ENCODE measurements at regions of chr1 and their contacts with region 1.

Region 1: DNA sequence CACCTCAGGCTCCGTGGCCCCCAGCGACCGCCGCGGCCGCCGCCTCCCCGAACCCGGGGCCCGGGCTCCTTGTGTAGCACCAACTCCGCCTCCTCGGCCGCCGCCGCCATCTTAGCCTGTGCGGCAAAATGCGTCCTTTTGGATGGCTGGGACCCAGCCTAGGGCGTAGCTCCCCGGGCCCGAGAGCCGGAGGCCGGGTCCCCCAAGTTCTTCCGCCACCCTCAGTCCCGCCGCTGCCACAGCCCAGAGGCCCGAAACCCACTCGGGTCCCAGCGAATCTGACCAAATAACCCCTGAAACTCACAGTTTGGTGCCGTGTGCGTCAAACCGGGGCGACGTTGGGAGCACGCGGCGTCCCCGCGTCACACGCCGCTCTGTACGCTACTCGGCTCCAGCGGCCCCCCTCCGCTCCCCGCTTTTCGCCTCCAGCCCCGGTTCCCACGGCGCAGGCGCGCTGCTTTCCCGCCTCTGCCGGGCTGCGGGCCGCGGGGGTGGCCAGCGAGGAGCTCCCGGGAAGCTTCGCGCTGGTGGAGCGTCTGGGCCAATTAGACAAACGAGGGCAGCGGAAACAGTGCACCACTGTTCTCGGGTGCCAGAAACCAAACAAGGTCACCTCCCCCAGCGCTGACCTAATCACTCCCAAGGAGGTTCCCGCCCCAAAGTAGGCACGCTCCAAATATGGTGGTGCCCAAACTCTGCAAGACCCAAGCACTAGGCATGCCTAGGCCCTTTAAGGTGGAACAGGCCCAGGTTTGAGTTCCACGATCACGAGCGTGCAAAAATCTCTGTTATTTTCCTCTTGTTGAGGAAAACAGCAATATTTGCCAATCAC is at the start of gene ZNF644:
- DNase-seq: peak; percentile 92
- ATAC-seq: peak; percentile 83
- H3K4me3 ChIP-seq: peak within 1 kb of the TSS; percentile 76 to 99 (median 95)
- H3K4me3 Mint-ChIP-seq: peak within 1 kb of the TSS; percentile 96
- H3K27ac ChIP-seq: peak within 1 kb of the TSS; percentile 100
- H3K27ac Mint-ChIP-seq: peak within 1 kb of the TSS; percentile 99
- H3K4me1 ChIP-seq: peaks cover 49 to 70% of the 10 kb centered on the region in 2 donors
- H3K4me1 Mint-ChIP-seq: peaks cover 74% of the 10 kb centered on the region
- H3K27me3 ChIP-seq: no peaks in the 10 kb centered on the region
- H3K27me3 Mint-ChIP-seq: no peaks in the 10 kb centered on the region
- CTCF ChIP-seq: no peak
- total RNA-seq, gene ZNF644: 124 and 131 TPM in 2 replicates

Region 2: DNA sequence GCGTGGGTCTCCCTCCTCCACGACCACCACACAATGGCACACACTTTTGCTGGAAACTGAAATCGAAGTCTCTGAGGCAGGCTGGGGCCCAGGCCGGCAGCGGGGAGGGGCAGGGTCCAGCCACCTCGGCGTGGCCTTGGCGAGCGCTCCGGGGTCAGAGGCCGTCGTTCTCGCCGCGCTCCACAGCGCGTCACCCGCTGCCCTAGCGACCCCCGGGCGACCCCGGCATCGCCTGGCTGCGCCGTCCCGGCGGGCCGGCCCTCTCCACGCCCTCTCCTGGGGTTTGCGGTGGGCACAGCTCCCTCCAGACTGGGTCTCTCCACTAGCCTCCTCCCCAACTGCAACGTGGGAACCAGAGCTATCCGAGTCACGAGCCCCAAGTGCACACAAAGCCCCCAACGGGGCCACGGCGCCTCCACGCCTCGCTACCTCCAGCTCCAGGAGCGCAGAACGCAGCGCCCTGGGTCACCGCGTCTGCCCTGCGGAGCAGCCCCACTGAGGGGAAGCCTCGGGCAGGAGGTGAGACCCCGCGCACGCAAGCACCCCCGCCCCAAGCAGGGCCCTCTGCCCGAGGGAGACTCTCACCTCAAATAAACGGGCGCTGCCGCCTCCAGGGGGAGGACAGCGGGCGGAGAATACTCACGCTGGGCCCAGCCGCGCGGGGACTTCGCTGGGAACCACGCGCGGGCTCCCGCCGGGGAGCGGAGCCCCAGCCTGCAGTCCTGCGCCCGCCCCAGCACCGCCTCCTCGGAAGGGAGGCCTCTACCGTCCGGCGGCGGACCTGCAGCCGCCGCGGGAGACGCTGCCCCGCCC is 170.8 kb before region 1 on chr1:
- CTCF ChIA-PET with region 1: no interaction called
- POLR2A ChIA-PET with region 1: no interaction called
- intact Hi-C with region 1: loop called (anchors 2 kb)
- DNase-seq: peak; percentile 83
- ATAC-seq: peak; percentile 99
- H3K4me3 ChIP-seq: peak overlapping the region; percentile 17 to 72 (median 62)
- H3K4me3 Mint-ChIP-seq: peak overlapping the region; percentile 90
- H3K27ac ChIP-seq: no peak overlapping the region
- H3K27ac Mint-ChIP-seq: no peak overlapping the region
- H3K4me1 ChIP-seq: peaks cover 15 to 19% of the 10 kb centered on the region in 2 donors
- H3K4me1 Mint-ChIP-seq: peaks cover 13% of the 10 kb centered on the region
- H3K27me3 ChIP-seq: peaks cover 3 to 23% (median 23%) of the 10 kb centered on the region in 4 experiments
- H3K27me3 Mint-ChIP-seq: peaks cover 43% of the 10 kb centered on the region
- CTCF ChIP-seq: peak; percentile 76

Region 3: GRCh38 chr1:90964444-90965035 is 57.4 kb before region 1 on chr1:
- CTCF ChIA-PET with region 1: no interaction called
- POLR2A ChIA-PET with region 1: no interaction called
- intact Hi-C with region 1: no loop called
- DNase-seq: no peak
- ATAC-seq: no peak
- H3K4me3 ChIP-seq: no peak overlapping the region
- H3K4me3 Mint-ChIP-seq: no peak overlapping the region
- H3K27ac ChIP-seq: no peak overlapping the region
- H3K27ac Mint-ChIP-seq: no peak overlapping the region
- H3K4me1 ChIP-seq: no peaks in the 10 kb centered on the region
- H3K4me1 Mint-ChIP-seq: peaks cover 48% of the 10 kb centered on the region
- H3K27me3 ChIP-seq: no peaks in the 10 kb centered on the region
- H3K27me3 Mint-ChIP-seq: no peaks in the 10 kb centered on the region
- CTCF ChIP-seq: peak; percentile 12

Region 4: DNA sequence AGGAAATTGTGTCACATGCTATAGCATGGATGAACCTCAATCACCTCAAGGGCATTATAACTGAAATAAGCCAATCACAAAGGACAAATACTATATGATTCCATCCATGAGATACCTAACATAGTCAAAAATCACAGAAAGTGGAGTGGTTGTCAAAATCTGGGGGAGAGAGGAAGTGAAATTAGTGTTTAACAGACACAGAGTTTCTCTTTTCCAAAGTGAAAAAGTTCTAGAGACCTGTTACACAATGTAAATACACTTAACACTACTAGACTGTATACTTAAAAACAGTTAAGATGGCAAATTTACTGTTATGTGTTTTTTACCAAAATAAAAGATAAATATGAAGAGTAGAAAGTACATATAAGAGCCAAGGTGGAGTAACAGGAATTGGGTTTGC is 31.9 kb before region 1 on chr1:
- CTCF ChIA-PET with region 1: interaction called, 3 read pairs
- POLR2A ChIA-PET with region 1: no interaction called
- intact Hi-C with region 1: loop called (anchors 5 kb)
- DNase-seq: peak; percentile 29
- ATAC-seq: no peak
- H3K4me3 ChIP-seq: no peak overlapping the region
- H3K4me3 Mint-ChIP-seq: peak overlapping the region; percentile 40
- H3K27ac ChIP-seq: peak overlapping the region; percentile 39 to 75
- H3K27ac Mint-ChIP-seq: peak overlapping the region; percentile 37
- H3K4me1 ChIP-seq: peaks cover 31 to 61% of the 10 kb centered on the region in 2 donors
- H3K4me1 Mint-ChIP-seq: peaks cover 84% of the 10 kb centered on the region
- H3K27me3 ChIP-seq: no peaks in the 10 kb centered on the region
- H3K27me3 Mint-ChIP-seq: no peaks in the 10 kb centered on the region
- CTCF ChIP-seq: no peak

Region 5: GRCh38 chr1:91054780-91055481 is 33.0 kb after region 1 on chr1:
- CTCF ChIA-PET with region 1: interaction called, 5 read pairs
- POLR2A ChIA-PET with region 1: interaction called, 5 read pairs
- intact Hi-C with region 1: loop called (anchors 2 kb)
- DNase-seq: peak; percentile 69
- ATAC-seq: peak; percentile 87
- H3K4me3 ChIP-seq: peak overlapping the region in 1 of 5 experiments; percentile 34
- H3K4me3 Mint-ChIP-seq: no peak overlapping the region
- H3K27ac ChIP-seq: peak overlapping the region; percentile 48 to 73
- H3K27ac Mint-ChIP-seq: no peak overlapping the region
- H3K4me1 ChIP-seq: peaks cover 50 to 62% of the 10 kb centered on the region in 2 donors
- H3K4me1 Mint-ChIP-seq: peaks cover 9% of the 10 kb centered on the region
- H3K27me3 ChIP-seq: no peaks in the 10 kb centered on the region
- H3K27me3 Mint-ChIP-seq: no peaks in the 10 kb centered on the region
- CTCF ChIP-seq: no peak

Measured in B cell (primary cell).